ENCODE measurements at regions of chr4 and their contacts with region 1.

Region 1: GRCh38 chr4:147590249-147590920 is 26.8 kb upstream of the TMEM184C start:
- DNase-seq: peak; percentile 33
- H3K4me3 ChIP-seq: no peak overlapping the region
- H3K27ac ChIP-seq: no peak overlapping the region
- H3K4me1 ChIP-seq: no peaks in the 10 kb centered on the region
- H3K27me3 ChIP-seq: no peaks in the 10 kb centered on the region
- CTCF ChIP-seq: peak; percentile 76

Region 2: GRCh38 chr4:147103403-147103946 is 486.9 kb before region 1 on chr4:
- intact Hi-C with region 1: loop called (anchors 10 kb)
- DNase-seq: no peak
- H3K4me3 ChIP-seq: no peak overlapping the region
- H3K27ac ChIP-seq: peak overlapping the region; percentile 65
- H3K4me1 ChIP-seq: peaks cover 22% of the 10 kb centered on the region
- H3K27me3 ChIP-seq: no peaks in the 10 kb centered on the region
- CTCF ChIP-seq: no peak

Measured in left ventricle myocardium inferior (tissue), 1 donor.